Activated CD4-positive, alpha-beta memory T cell treated with anti-CD3 and anti-CD28 coated beads for 36 hours (primary cell): ENCODE measurements at regions of chr12 and their contacts with region 1.

Region 1: GRCh38 chr12:89225808-89226411 is 126.4 kb downstream of the DUSP6 start:
- DNase-seq: peak; percentile 72
- H3K4me3 Mint-ChIP-seq: peak overlapping the region; percentile 34
- H3K27ac Mint-ChIP-seq: peak overlapping the region; percentile 99
- H3K4me1 Mint-ChIP-seq: peaks cover 65% of the 10 kb centered on the region
- H3K27me3 Mint-ChIP-seq: no peaks in the 10 kb centered on the region

Region 2: DNA sequence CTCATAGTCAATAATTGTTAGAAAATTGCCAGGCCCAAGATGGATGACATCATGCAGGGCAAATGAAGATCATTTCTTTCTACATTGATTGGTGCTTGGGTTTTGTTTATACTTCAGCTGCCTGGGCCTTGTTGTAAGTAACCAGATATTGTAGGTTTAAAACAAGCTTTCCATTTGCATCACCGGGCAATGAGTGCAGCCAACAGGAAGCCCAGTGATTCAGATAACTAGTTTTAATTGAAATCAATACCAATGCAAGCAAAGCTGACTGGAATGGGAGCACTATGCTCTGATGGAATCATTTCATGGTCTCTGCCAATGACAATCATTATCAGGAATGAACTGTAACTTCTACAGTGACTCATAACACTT is 152.9 kb before region 1 on chr12:
- CTCF ChIA-PET with region 1: interaction called, 4 read pairs
- POLR2A ChIA-PET with region 1: interaction called, 5 read pairs
- intact Hi-C with region 1: loop called (anchors 1 kb)
- DNase-seq: peak; percentile 48
- H3K4me3 Mint-ChIP-seq: no peak overlapping the region
- H3K27ac Mint-ChIP-seq: peak overlapping the region; percentile 86
- H3K4me1 Mint-ChIP-seq: peaks cover 41% of the 10 kb centered on the region
- H3K27me3 Mint-ChIP-seq: no peaks in the 10 kb centered on the region

Region 3: GRCh38 chr12:89162704-89163261 is 63.1 kb before region 1 on chr12:
- CTCF ChIA-PET with region 1: interaction called, 7 read pairs
- POLR2A ChIA-PET with region 1: interaction called, 7 read pairs
- intact Hi-C with region 1: loop called (anchors 1 kb)
- DNase-seq: peak; percentile 90
- H3K4me3 Mint-ChIP-seq: no peak overlapping the region
- H3K27ac Mint-ChIP-seq: no peak overlapping the region
- H3K4me1 Mint-ChIP-seq: peaks cover 13% of the 10 kb centered on the region
- H3K27me3 Mint-ChIP-seq: no peaks in the 10 kb centered on the region

Region 4: DNA sequence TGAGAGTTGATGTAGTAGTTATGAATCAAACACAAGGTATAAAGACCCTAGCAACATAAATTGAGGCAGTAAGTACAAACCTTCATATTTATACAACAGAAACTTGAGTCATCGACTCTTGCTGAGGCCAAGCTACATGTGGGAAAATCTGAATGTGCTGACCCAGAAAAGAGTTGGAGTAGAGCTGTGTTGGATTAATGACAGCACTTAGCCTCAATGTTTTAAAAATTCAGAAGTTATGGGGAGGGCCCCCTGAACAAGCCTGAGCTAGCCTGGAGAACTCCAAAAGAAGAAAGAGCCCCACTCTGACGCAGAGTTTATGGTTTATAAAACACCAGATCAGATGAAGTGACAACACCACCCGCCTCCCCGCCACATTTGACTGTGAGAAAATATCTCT is 26.4 kb after region 1 on chr12:
- CTCF ChIA-PET with region 1: interaction called, 4 read pairs
- POLR2A ChIA-PET with region 1: interaction called, 9 read pairs
- intact Hi-C with region 1: loop called (anchors 2 kb)
- DNase-seq: peak; percentile 21
- H3K4me3 Mint-ChIP-seq: no peak overlapping the region
- H3K27ac Mint-ChIP-seq: peak overlapping the region; percentile 81
- H3K4me1 Mint-ChIP-seq: peaks cover 34% of the 10 kb centered on the region
- H3K27me3 Mint-ChIP-seq: no peaks in the 10 kb centered on the region

Region 5: DNA sequence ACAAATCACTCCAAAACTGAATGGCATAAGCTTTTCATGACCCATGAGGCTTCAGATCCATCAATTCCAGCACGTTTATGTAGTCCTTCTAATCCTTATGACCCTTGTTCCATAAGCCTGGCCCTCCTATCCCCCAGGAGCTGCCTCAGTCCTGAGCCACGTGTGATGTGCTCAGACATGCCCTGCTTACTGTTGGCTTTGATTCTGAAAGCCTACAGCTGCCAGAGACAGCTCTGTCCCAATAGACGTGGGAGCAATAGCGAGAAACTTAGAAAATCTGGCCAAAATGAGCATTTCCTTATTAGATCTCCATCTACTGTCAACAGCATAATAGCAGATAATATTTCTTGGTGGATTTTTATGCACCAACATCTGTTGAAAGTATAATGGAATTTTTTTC is 93.2 kb after region 1 on chr12:
- CTCF ChIA-PET with region 1: no interaction called
- POLR2A ChIA-PET with region 1: no interaction called
- intact Hi-C with region 1: no loop called
- DNase-seq: no peak
- H3K4me3 Mint-ChIP-seq: no peak overlapping the region
- H3K27ac Mint-ChIP-seq: no peak overlapping the region
- H3K4me1 Mint-ChIP-seq: peaks cover 14% of the 10 kb centered on the region
- H3K27me3 Mint-ChIP-seq: no peaks in the 10 kb centered on the region

Region 6: DNA sequence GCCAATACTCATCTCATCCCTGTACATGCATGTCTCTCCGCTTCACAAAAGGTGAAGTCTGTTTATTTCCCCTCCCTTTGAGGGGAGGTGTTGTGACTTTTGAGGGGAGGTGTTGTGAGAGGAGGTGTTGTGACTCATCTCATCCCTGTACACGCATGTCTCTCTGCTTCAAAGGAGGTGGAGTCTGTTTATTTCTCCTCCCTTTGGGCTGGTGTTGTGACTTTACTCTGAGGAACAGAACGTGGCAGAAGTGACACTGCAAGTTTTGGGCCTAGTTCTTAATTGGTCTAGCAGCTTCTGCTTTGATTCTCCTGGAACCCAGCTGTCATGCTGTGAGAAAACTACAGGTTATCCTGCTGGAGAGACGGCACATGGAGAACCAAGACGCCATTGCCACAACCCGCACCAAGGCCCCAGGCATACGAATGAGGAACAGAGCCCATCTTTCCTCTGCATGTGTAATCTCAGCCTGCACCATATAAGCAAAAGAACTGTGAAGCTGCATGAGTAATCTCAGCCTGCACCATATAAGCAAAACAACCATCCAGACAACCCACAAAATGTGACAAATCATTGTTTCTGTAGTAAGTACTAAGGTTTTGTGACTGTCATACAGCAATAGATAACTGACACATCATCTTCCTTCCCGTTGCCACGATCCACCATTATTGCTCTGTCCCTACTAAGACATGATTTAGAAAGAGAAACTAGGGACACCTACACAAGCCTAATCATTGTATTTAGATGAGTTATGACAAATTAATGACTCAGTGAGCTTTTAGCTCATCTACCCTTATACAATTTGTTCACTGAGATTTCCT is 268.7 kb after region 1 on chr12:
- CTCF ChIA-PET with region 1: no interaction called
- POLR2A ChIA-PET with region 1: no interaction called
- intact Hi-C with region 1: loop called (anchors 1 kb)
- DNase-seq: peak; percentile 71
- H3K4me3 Mint-ChIP-seq: peak overlapping the region; percentile 36
- H3K27ac Mint-ChIP-seq: peak overlapping the region; percentile 99
- H3K4me1 Mint-ChIP-seq: peaks cover 30% of the 10 kb centered on the region
- H3K27me3 Mint-ChIP-seq: no peaks in the 10 kb centered on the region

Region 7: GRCh38 chr12:89862511-89863179 is 636.7 kb after region 1 on chr12:
- CTCF ChIA-PET with region 1: no interaction called
- POLR2A ChIA-PET with region 1: no interaction called
- intact Hi-C with region 1: loop called (anchors 10 kb)
- DNase-seq: peak; percentile 57
- H3K4me3 Mint-ChIP-seq: peak overlapping the region; percentile 66
- H3K27ac Mint-ChIP-seq: peak overlapping the region; percentile 95
- H3K4me1 Mint-ChIP-seq: peaks cover 67% of the 10 kb centered on the region
- H3K27me3 Mint-ChIP-seq: no peaks in the 10 kb centered on the region